ENCODE measurements at regions of chr3 and their contacts with region 1.

Region 1: GRCh38 chr3:17412950-17413530 is 329.4 kb downstream of the TBC1D5 start:
- DNase-seq: peak; percentile 82
- ATAC-seq: peak; percentile 92
- H3K4me3 ChIP-seq: no peak overlapping the region
- H3K27ac ChIP-seq: no peak overlapping the region
- H3K4me1 ChIP-seq: 0 out of 2 replicates have a peak, but pooled peaks cover 6% of the 10 kb centered on the region
- H3K27me3 ChIP-seq: no peaks in the 10 kb centered on the region
- CTCF ChIP-seq: peak; percentile 94

Region 2: DNA sequence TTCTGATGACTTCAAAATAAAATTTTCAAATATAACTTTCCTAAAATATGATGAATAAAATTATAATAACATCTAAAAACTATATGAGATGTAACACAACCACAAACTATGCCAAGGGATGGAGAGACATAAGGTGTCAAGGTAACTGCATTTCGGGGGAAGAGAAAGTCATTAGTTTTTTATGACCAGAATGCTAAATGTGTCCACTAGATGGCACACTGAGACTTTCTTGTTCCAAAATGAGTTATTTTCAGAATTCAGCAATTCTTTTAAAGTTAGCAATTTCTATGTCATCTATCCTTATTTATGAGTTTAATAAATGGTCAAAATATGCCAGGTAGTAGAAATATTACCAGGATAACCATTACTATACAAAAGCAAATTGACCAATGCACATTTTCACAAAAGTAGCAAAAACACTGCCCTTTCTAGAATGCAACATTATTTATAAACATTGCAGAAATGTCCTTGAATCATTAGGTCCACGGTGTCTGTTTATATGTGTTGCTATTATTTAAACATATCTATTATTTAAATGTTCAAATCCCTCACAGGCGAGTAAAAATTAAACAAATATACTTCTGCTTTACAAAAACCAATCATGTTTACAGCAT is 154.1 kb before region 1 on chr3:
- CTCF ChIA-PET with region 1: no interaction called
- POLR2A ChIA-PET with region 1: no interaction called
- intact Hi-C with region 1: loop called (anchors 1 kb)
- DNase-seq: peak; percentile 71
- ATAC-seq: 0 out of 2 replicates have a peak, but pooled peaks have one; percentile 20
- H3K4me3 ChIP-seq: no peak overlapping the region
- H3K27ac ChIP-seq: no peak overlapping the region
- H3K4me1 ChIP-seq: no peaks in the 10 kb centered on the region
- H3K27me3 ChIP-seq: no peaks in the 10 kb centered on the region
- CTCF ChIP-seq: peak; percentile 86

Region 3: DNA sequence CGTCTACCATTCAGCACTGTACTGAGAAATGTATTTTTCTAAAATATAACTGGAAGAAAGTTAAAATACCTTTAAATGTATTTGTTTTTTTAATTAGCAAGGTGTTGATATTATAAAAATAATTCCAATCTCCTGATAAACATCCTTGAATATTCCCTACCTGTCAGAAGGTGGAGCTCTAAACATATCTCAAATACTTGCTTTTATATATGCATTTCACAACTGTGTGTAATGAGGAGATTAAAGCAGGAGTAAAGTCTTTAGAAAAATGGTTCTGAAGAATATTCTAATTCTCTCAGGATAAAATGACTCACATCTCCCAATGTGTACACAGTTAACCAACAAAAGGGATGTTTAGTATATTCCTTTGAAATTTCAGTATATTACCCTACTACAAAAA is 105.6 kb before region 1 on chr3:
- CTCF ChIA-PET with region 1: no interaction called
- POLR2A ChIA-PET with region 1: no interaction called
- intact Hi-C with region 1: loop called (anchors 1 kb)
- DNase-seq: peak; percentile 45
- ATAC-seq: peak; percentile 80
- H3K4me3 ChIP-seq: no peak overlapping the region
- H3K27ac ChIP-seq: no peak overlapping the region
- H3K4me1 ChIP-seq: no peaks in the 10 kb centered on the region
- H3K27me3 ChIP-seq: no peaks in the 10 kb centered on the region
- CTCF ChIP-seq: peak; percentile 63

Region 4: DNA sequence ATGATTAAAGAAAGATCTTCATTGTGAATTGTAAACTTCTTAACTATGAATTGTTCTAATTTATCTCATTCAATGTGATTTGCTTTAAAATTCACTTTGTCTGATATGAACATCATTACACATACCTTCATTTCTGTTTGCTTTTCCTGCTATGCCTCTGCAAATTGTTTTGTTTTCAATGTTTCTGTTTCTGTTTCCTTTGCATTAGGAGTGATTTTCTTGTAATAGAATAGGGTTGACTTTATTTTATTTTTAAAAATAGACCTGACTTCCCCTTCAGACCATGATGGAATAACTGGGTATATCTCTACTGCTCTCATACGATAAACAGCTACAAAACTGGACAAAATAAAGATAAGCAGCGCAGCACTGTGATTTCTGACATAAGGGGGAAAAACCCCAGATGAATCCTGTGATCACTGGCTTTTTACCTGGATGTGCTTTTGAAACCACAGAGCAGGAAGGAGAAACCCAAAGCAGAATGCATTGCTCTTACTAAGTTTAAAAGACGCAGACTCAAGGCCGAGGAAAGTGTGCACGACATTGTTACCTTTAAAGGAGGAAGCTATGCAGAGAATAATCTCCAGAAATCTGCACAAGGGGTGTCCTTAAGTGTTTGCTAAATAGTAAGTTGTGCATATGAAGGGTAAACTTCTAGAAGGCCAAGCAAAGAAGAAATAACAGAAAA is 90.8 kb before region 1 on chr3:
- CTCF ChIA-PET with region 1: no interaction called
- POLR2A ChIA-PET with region 1: no interaction called
- intact Hi-C with region 1: loop called (anchors 5 kb)
- DNase-seq: no peak
- ATAC-seq: no peak
- H3K4me3 ChIP-seq: no peak overlapping the region
- H3K27ac ChIP-seq: no peak overlapping the region
- H3K4me1 ChIP-seq: no peaks in the 10 kb centered on the region
- H3K27me3 ChIP-seq: no peaks in the 10 kb centered on the region
- CTCF ChIP-seq: no peak

Region 5: GRCh38 chr3:17655743-17656142 is 242.7 kb after region 1 on chr3:
- CTCF ChIA-PET with region 1: no interaction called
- POLR2A ChIA-PET with region 1: no interaction called
- intact Hi-C with region 1: no loop called
- DNase-seq: no peak
- ATAC-seq: no peak
- H3K4me3 ChIP-seq: no peak overlapping the region
- H3K27ac ChIP-seq: no peak overlapping the region
- H3K4me1 ChIP-seq: no peaks in the 10 kb centered on the region
- H3K27me3 ChIP-seq: no peaks in the 10 kb centered on the region
- CTCF ChIP-seq: no peak

Measured in PC-3 (cell line).